Esophagus squamous epithelium (tissue), 5 donors: ENCODE measurements at regions of chr1 and their contacts with region 1.

Region 1: GRCh38 chr1:145963995-145964901 is at the starts of genes ANKRD34A and POLR3GL:
- DNase-seq: peak; percentile 80
- H3K4me3 ChIP-seq: peak within 1 kb of the TSS; percentile 51 to 78 (median 65)
- H3K27ac ChIP-seq: peak within 1 kb of the TSS; percentile 86 to 96 (median 90)
- H3K4me1 ChIP-seq: peaks cover 30 to 68% (median 34%) of the 10 kb centered on the region in 3 donors
- H3K27me3 ChIP-seq: peaks cover 0 to 10% (median 0%) of the 10 kb centered on the region in 4 donors
- CTCF ChIP-seq: no peak
- POLR2A ChIP-seq: peak in 3 of 4 donors; percentile 87 to 98 (median 92)
- total RNA-seq, gene ANKRD34A: 0.04 to 0.67 (median 0.30) TPM
- total RNA-seq, gene POLR3GL: 2.9 to 15.9 (median 9.8) TPM

Region 2: DNA sequence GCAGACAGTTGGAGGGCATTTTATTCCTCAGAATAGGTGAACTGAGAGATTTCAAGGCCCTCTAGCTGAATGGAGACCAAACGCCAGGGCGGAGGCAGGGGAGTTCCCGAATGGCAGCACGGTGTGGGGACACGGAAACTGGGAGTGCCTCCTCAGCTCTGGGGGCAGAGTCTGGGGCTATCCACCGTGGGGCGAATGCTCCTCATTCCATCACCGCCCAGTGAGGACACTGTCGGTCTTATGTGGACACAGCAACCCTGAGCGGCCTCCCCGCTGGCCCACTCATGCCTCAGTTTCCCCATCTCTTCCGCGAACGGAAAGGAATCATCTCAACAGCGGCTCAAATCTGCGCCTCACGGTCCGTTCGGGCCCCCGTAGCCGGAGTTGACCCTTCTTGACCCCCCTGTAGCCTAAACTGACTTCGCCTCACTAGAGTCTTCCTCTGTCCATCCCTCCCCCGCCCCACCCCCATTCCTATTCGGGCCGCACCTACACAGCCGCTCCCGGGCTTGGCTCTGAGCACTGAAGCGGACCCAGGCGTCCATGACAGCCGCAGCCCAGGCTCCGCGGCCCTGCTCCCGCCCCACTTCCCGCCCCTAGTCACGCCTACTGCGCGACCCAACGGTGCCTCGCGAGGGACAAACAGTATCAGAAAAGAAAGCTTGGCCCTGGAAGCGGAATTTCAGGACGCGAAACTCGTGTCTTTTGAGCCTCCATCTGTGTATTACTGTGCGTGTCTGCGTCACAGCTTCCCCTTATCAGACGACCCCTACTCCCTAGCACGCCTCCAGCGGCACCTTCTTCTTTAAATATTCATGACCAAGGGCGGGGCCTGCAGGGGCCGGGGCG is 45.9 kb before region 1 on chr1 and contains the start of gene PEX11B:
- intact Hi-C with region 1: loop called (anchors 5 kb)
- DNase-seq: peak; percentile 74
- H3K4me3 ChIP-seq: peak within 1 kb of the TSS; percentile 52 to 91 (median 85)
- H3K27ac ChIP-seq: peak within 1 kb of the TSS; percentile 81 to 93 (median 92)
- H3K4me1 ChIP-seq: peaks cover 12 to 34% (median 20%) of the 10 kb centered on the region in 3 donors
- H3K27me3 ChIP-seq: no peaks in the 10 kb centered on the region
- CTCF ChIP-seq: peak in 1 of 6 experiments; percentile 18
- POLR2A ChIP-seq: peak in 1 of 4 donors; percentile 67
- total RNA-seq, gene PEX11B: 19.3 to 30.8 (median 25.1) TPM